Gastrocnemius medialis (tissue), 4 donors: ENCODE measurements at regions of chr15 and their contacts with region 1.

Region 1: DNA sequence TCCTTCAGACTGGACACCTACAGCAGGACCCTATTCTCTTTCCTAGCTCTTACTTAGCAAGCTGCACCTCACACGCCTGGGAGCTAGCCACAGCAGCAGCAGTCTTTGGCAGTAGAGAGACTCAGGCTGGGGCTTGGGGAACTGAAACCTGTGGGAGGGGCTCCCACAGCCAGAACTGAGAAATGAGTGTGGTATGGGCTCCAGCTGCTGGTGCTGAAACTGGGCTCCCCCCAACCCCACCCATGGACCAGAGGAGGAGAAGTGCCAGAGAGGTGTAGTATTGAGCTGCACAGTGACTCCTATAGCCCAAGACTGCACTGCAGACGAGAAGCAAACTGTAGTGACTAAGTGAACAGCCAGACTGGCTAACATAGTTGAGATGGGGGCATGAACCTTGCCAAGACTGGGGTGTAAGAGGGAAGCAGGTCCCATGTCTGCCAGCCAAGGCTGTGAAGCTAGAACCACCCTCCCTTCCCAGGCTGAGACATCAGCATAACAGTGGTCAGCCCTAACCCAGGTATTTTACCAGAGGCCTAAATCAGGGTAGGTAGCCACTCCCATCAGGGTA is 62.5 kb downstream of the MYO5A start:
- DNase-seq: peak in 1 of 2 donors; percentile 42
- ATAC-seq: peak; percentile 24
- H3K4me3 ChIP-seq: no peak overlapping the region
- H3K27ac ChIP-seq: peak overlapping the region in 2 of 4 donors; percentile 18 to 38
- H3K4me1 ChIP-seq: peaks cover 12 to 15% of the 10 kb centered on the region in 2 donors
- H3K27me3 ChIP-seq: no peaks in the 10 kb centered on the region
- CTCF ChIP-seq: no peak
- POLR2A ChIP-seq: no peak

Region 2: DNA sequence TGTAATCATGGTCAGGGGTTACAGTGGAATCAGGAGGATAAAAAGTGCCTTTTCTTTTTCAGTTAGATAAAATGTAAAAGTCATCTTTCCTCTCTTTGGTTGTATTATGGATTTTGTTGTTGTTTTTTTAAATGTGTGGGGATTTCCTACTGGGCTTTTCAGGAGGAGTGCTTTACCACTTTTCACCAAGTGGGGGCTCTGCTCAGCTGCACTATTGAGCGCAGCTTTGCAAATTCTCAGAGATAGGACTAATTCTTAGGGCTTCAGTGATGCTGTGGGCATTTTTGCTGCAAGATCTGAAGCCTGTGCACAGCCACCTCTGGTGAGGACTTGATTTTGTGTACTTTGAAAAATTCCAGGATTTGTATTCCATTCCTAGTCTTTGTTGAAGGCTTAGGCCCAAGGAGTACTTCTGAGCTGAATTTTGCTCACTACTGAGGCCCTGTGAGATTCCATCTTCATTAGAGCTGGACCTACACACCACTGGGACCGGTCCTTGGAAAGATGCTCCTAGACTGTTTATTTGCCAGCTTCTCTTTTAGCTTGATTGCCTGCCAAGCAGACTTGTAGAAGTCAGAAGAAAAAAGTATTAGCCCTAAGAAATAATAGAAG is 282.6 kb before region 1 on chr15:
- in situ Hi-C with region 1: no loop called
- intact Hi-C with region 1: no loop called
- DNase-seq: no peak
- ATAC-seq: no peak
- H3K4me3 ChIP-seq: no peak overlapping the region
- H3K27ac ChIP-seq: no peak overlapping the region
- H3K4me1 ChIP-seq: peaks cover 4 to 10% of the 10 kb centered on the region in 2 donors
- H3K27me3 ChIP-seq: peaks cover 0 to 15% (median 0%) of the 10 kb centered on the region in 3 donors
- CTCF ChIP-seq: peak in 4 of 5 experiments; percentile 20 to 66 (median 44)
- POLR2A ChIP-seq: no peak

Region 3: GRCh38 chr15:52276256-52276770 is 189.9 kb before region 1 on chr15:
- in situ Hi-C with region 1: no loop called
- intact Hi-C with region 1: no loop called
- DNase-seq: no peak
- ATAC-seq: no peak
- H3K4me3 ChIP-seq: no peak overlapping the region
- H3K27ac ChIP-seq: no peak overlapping the region
- H3K4me1 ChIP-seq: no peaks in the 10 kb centered on the region
- H3K27me3 ChIP-seq: no peaks in the 10 kb centered on the region
- CTCF ChIP-seq: no peak
- POLR2A ChIP-seq: no peak

Region 4: GRCh38 chr15:52331490-52332240 is 134.6 kb before region 1 on chr15:
- in situ Hi-C with region 1: loop called in 3 of 4 experiments (anchors 25 kb)
- intact Hi-C with region 1: loop called (anchors 5 kb)
- DNase-seq: peak; percentile 24 to 33
- ATAC-seq: peak; percentile 82 to 87
- H3K4me3 ChIP-seq: no peak overlapping the region
- H3K27ac ChIP-seq: no peak overlapping the region
- H3K4me1 ChIP-seq: peaks cover 13 to 23% of the 10 kb centered on the region in 2 donors
- H3K27me3 ChIP-seq: no peaks in the 10 kb centered on the region
- CTCF ChIP-seq: peak in 4 of 5 experiments; percentile 20 to 49 (median 33)
- POLR2A ChIP-seq: no peak

Region 5: DNA sequence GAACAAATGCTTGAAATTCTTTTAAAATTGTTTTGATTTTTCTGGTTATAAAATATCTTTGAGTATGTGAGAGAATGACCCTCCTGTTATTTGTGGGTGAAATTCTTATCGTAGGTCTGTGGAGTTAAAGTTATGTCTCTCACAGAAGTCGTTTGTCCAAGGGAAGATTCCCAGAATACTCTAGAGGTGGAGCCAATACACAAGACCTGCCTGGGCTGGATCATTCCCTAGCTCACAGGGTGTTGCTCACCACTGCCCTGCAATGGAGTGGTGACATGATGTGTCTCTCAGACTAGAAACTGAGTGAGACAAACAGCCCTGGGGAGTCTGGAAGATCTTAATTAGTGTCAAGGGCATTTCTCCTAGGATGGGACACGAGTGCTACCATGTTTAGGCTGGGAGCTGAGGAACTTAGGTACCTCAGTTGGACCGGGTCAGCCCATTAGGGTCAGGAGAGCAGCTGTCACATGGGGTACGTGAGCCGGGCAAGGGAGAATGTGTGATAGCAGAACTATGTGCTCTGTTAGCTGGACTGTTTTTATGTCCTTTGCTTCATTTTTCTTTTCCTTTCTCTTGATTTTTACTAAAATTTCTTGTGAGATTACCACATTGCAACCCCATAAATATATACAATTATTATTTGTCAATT is 117.0 kb before region 1 on chr15:
- in situ Hi-C with region 1: loop called (anchors 10 to 25 kb)
- intact Hi-C with region 1: loop called (anchors 1 kb)
- DNase-seq: no peak
- ATAC-seq: peak; percentile 67 to 79
- H3K4me3 ChIP-seq: no peak overlapping the region
- H3K27ac ChIP-seq: peak overlapping the region in 1 of 4 donors; percentile 17
- H3K4me1 ChIP-seq: no peaks in the 10 kb centered on the region
- H3K27me3 ChIP-seq: no peaks in the 10 kb centered on the region
- CTCF ChIP-seq: no peak
- POLR2A ChIP-seq: no peak

Region 6: DNA sequence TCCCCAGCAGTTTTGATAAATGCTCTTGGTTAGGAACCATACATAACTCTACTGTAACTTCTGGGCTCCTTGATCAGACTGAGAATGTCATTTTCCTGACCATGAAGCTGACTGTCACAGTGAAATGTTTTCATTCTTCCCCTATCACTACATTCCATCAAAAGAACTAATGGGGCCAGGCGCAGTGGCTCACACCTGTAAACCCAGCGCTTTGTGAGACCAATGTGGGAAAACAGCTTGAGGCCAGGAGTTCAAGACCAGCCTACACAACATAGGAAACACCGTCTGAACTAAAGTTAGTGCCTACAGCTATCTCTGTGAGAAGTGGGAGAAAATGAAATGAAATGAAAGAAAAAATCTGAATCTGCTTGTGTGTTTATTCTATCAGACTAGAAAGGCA is 97.8 kb before region 1 on chr15:
- in situ Hi-C with region 1: no loop called
- intact Hi-C with region 1: loop called (anchors 5 kb)
- DNase-seq: no peak
- ATAC-seq: no peak
- H3K4me3 ChIP-seq: no peak overlapping the region
- H3K27ac ChIP-seq: peak overlapping the region in 3 of 4 donors; percentile 69 to 77 (median 71)
- H3K4me1 ChIP-seq: peaks cover 0 to 13% of the 10 kb centered on the region in 2 donors
- H3K27me3 ChIP-seq: no peaks in the 10 kb centered on the region
- CTCF ChIP-seq: no peak
- POLR2A ChIP-seq: no peak